Endothelial cell of umbilical vein (primary cell): ENCODE measurements at regions of chr1 and their contacts with region 1.

Region 1: GRCh38 chr1:203807196-203807595 is 11.8 kb downstream of the ZBED6 start:
- DNase-seq: no peak
- H3K4me3 ChIP-seq: no peak overlapping the region
- H3K27ac ChIP-seq: no peak overlapping the region
- H3K4me1 ChIP-seq: no peaks in the 10 kb centered on the region
- H3K27me3 ChIP-seq: no peaks in the 10 kb centered on the region
- CTCF ChIP-seq: no peak
- POLR2A ChIP-seq: no peak

Region 2: GRCh38 chr1:203769505-203770343 is 37.5 kb before region 1 on chr1:
- CTCF ChIA-PET with region 1: no interaction called
- POLR2A ChIA-PET with region 1: no interaction called
- dilution Hi-C with region 1: no loop called
- intact Hi-C with region 1: loop called (anchors 1 kb)
- DNase-seq: peak; percentile 68
- H3K4me3 ChIP-seq: no peak overlapping the region
- H3K27ac ChIP-seq: no peak overlapping the region
- H3K4me1 ChIP-seq: peaks cover 3% of the 10 kb centered on the region
- H3K27me3 ChIP-seq: peaks cover 0 to 5% of the 10 kb centered on the region in 2 experiments
- CTCF ChIP-seq: no peak
- POLR2A ChIP-seq: no peak

Region 3: GRCh38 chr1:203840208-203840808 is 33.1 kb after region 1 on chr1:
- CTCF ChIA-PET with region 1: no interaction called
- POLR2A ChIA-PET with region 1: no interaction called
- dilution Hi-C with region 1: no loop called
- intact Hi-C with region 1: no loop called
- DNase-seq: no peak
- H3K4me3 ChIP-seq: no peak overlapping the region
- H3K27ac ChIP-seq: no peak overlapping the region
- H3K4me1 ChIP-seq: no peaks in the 10 kb centered on the region
- H3K27me3 ChIP-seq: no peaks in the 10 kb centered on the region
- CTCF ChIP-seq: no peak
- POLR2A ChIP-seq: no peak